Dendritic cell treated with granulocyte-macrophage colony-stimulating factor and Interleukin-4, amounts not matched to agents 40 ng/mL and 50 ng/mL, for 4 days (primary cell): ENCODE measurements at regions of chr1 and their contacts with region 1.

Region 1: DNA sequence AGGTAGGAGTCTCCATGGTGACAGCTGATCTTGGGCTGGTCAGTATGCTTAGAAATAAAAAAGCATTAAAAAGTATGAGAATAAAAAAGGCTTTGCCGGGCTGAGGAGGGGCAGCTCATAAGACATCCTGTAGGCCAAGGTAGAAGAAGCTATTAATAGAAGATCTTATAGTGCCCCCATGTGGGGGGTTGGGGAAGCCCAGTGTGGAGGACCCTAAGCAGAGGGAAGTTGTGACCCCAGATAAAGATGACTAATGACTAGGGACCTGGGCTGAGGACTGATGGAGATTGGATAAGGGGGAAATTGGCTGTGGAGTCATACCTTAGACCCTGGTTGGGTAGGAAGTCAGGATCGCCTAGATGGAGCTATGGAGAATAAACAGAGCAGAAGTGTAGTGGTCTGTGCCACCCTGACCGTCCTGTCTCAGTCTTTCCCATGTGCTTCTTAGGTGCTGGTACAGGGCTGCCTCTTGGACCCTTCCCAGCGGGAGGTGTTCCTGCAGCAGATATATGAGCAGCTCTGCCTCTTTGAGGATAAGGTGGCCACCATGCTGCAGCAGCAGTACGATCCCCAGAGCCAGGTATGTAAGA is 25.0 kb downstream of the SZT2 start:
- H3K4me3 Mint-ChIP-seq: no peak overlapping the region
- H3K27ac Mint-ChIP-seq: no peak overlapping the region
- H3K4me1 Mint-ChIP-seq: peaks cover 5% of the 10 kb centered on the region
- H3K27me3 Mint-ChIP-seq: no peaks in the 10 kb centered on the region

Region 2: DNA sequence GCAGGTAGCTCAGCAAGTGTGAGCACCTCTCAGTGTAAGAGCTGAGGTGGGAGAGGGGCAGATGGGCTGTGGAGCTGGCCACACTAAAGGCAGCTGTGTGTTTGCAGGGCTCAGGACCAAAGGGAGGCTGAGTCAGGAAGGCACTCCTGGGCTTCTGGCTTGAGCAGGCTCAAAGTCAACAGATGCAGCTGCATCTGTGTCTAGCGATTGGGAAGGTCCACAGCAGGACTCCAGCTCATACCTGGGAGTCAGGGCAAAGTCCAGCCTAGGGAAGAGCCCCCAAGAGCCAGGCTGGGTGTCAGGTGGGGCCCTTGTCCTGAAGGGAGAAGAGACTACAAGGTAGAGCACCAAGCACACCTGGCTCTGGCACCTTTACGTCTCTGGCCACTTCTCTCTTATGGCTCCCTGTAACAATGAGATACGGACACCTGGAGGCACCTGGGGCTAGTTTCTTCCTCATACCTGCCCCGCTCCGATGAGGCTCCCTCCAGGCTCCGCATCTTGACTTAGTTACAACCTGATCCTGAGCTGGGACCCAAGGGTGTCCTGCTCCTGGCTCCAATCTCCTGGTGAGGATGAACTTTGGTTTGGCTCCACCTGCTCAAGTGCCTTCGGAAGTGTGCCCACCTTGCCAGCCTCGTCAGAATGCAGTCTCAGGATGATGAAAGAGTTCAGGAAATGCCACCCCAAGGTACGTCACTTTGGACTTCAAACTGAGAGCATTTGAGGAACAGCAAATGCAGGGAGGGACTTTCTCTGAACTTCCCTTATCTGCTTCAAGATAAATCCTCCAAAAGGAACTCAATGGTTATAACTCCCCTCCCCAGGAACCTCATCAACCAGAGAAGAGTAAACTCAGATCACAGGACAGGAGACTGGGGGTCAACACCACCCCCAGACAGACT is 434.6 kb before region 1 on chr1:
- intact Hi-C with region 1: no loop called
- H3K4me3 Mint-ChIP-seq: no peak overlapping the region
- H3K27ac Mint-ChIP-seq: peak overlapping the region; percentile 82
- H3K4me1 Mint-ChIP-seq: peaks cover 28% of the 10 kb centered on the region
- H3K27me3 Mint-ChIP-seq: no peaks in the 10 kb centered on the region

Region 3: DNA sequence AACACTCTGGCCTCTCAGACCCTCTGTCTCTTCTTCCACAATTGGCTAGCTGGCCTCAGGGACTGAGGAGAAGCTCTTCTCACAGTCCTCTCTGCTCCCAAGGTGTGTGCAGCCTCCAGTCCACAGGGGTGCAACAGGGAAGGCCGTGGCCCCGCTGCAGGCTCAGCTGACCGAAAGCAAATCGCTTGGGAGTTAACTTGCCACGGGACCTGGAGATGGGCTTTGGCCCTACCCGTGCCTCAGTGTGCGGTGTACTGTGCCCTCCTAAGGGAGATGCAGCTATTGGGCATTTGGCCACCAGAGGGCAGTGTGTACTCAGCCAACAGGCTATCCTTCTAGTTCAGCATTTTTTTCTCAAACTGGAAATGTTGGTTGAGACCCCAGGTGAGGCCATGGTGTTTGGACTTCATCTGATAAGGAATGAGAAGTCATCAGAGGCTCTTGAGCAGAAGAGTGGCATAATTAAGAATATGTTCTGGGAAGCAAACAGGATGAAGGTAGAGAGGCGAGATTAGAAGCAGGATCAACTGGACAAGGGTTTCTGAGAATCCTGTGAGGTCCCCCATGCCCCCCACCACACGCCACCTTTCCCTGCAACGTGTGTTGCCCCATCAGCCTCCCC is 187.5 kb before region 1 on chr1:
- intact Hi-C with region 1: loop called (anchors 1 kb)
- H3K4me3 Mint-ChIP-seq: no peak overlapping the region
- H3K27ac Mint-ChIP-seq: no peak overlapping the region
- H3K4me1 Mint-ChIP-seq: peaks cover 34% of the 10 kb centered on the region
- H3K27me3 Mint-ChIP-seq: peaks cover 5% of the 10 kb centered on the region

Region 4: DNA sequence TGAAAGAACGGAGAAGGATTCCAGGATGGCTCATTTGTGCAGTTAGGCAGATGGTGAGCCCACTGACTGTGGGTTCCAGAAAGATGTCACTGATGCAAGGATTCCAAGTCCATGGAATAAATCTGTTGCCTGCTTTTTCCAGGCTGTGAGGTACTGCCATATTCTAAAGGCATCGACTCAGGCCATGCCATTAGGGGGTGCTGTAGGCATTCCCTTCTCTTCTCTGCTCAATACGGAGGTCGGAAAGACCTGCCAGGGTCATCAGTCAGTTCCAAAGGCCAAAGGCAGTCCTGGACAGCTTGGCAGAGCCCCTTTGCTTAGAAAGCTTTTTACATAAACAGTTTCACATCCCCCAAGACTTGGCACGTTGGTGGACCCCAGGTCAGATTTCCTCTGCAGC is 176.6 kb before region 1 on chr1:
- intact Hi-C with region 1: loop called (anchors 1 kb)
- H3K4me3 Mint-ChIP-seq: no peak overlapping the region
- H3K27ac Mint-ChIP-seq: no peak overlapping the region
- H3K4me1 Mint-ChIP-seq: peaks cover 16% of the 10 kb centered on the region
- H3K27me3 Mint-ChIP-seq: no peaks in the 10 kb centered on the region

Region 5: GRCh38 chr1:43373066-43373940 is 41.4 kb before region 1 on chr1:
- intact Hi-C with region 1: no loop called
- H3K4me3 Mint-ChIP-seq: no peak overlapping the region
- H3K27ac Mint-ChIP-seq: no peak overlapping the region
- H3K4me1 Mint-ChIP-seq: peaks cover 31% of the 10 kb centered on the region
- H3K27me3 Mint-ChIP-seq: no peaks in the 10 kb centered on the region